Aorta (tissue), 5 donors: ENCODE measurements at regions of chr1 and their contacts with region 1.

Region 1: DNA sequence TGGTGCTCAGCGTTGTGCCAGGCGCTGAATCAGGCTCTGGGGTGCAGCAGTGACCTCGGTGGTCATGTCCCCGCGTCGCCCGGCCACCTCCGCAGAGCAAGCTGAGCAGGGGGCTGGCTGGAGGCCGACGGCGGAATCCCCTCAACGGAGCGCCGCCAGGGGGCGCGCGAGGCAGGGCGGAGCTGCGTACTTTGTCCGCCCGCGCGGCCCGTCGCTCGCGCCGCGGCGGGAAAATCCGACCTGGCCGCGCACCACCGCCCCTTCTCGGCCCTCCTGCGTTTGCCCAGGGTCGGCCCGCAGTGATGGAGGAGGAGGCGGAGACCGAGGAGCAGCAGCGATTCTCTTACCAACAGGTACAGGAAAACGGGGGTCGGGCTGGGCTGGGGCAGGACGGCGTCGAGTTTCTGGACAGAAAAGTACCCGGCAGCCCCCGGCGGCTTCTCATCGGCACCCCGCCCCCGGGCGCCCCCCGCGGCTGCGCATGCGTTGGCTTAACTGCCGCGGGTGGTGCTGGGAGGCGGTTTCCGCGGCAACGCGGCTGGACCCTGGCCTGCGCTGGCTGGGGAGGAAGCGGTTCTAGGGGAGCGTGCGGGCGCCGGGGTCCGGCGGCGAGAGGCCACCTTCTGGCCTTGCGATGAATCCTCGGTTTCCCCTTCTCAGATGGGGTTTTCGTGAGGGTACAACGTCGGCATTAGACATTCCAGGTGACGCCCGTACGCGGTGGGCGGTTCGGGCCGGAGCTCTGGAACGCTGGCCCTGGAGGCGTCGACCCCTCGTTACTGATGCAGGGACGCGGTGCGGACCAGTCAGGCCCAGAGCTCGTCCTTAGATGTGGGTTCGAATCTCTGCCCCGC is at the start of gene CENPS:
- DNase-seq: peak; percentile 96 to 98
- ATAC-seq: peak; percentile 99
- H3K4me3 ChIP-seq: peak within 1 kb of the TSS; percentile 38 to 46
- H3K27ac ChIP-seq: no peak within 1 kb of the TSS
- H3K4me1 ChIP-seq: no peaks in the 10 kb centered on the region
- H3K27me3 ChIP-seq: no peaks in the 10 kb centered on the region
- total RNA-seq, gene CENPS: 4.3 to 11.4 TPM

Region 2: GRCh38 chr1:10378081-10378841 is 52.2 kb before region 1 on chr1:
- intact Hi-C with region 1: loop called (anchors 1 kb)
- DNase-seq: peak; percentile 72 to 76
- ATAC-seq: peak; percentile 76
- H3K4me3 ChIP-seq: no peak overlapping the region
- H3K27ac ChIP-seq: peak overlapping the region in 1 of 2 donors; percentile 37
- H3K4me1 ChIP-seq: no peaks in the 10 kb centered on the region
- H3K27me3 ChIP-seq: no peaks in the 10 kb centered on the region

Region 3: GRCh38 chr1:10398734-10399623 is 31.5 kb before region 1 on chr1 and contains the start of gene PGD:
- intact Hi-C with region 1: loop called in 1 of 2 experiments (anchors 1 kb)
- DNase-seq: peak; percentile 99 to 100
- ATAC-seq: peak; percentile 100
- H3K4me3 ChIP-seq: peak within 1 kb of the TSS; percentile 84 to 85
- H3K27ac ChIP-seq: peak within 1 kb of the TSS in 1 of 2 donors; percentile 50
- H3K4me1 ChIP-seq: no peaks in the 10 kb centered on the region
- H3K27me3 ChIP-seq: no peaks in the 10 kb centered on the region
- total RNA-seq, gene PGD: 46.7 TPM

Region 4: DNA sequence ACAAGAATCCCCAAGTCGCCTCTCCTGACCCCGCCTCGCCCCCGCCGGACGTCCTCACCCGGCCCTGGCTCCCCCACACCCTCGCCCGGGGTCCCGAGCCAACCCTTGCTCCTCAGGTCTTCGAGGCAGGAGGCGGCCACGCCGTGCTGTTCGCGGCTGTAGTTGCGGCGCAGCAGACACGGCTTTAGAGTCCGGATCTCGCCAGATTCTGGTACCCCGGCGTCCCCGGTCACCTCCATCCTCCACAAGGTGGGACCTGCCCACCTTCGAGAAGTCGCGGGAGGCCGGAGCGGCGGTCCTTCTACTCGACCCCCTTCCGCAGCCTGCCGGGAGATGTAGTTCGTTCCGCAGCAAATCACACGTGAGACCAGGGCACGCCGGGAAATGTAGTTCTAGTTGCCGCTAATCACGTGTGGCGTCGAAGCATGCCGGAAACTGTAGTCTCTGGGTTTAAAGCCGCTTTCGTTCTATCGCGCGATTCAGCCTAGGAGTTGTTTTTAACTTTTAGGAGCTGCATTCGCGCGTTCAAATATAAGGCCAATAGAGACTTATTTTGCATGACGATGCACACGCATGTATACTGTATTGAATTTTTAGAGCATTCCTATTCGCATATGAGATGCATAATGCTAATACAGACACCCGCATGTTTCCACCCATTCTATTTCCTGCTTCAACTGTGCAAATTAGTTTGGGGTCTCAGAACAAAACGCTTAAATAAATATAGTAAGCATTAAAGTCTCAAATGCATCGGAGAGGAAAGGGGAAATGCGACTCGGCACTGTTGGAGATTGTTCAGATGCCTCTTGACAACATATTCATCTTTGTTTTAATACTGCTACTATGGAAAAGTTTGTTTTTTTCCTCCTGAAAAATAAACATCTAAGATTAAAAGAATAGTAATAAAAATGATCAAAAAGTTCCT is 42.0 kb after region 1 on chr1 and contains the start of gene DFFA:
- intact Hi-C with region 1: loop called in 1 of 2 experiments (anchors 5 kb)
- DNase-seq: peak; percentile 96 to 98
- ATAC-seq: peak; percentile 96
- H3K4me3 ChIP-seq: peak within 1 kb of the TSS; percentile 39 to 46
- H3K27ac ChIP-seq: no peak within 1 kb of the TSS
- H3K4me1 ChIP-seq: peaks cover 2 to 5% of the 10 kb centered on the region in 2 donors
- H3K27me3 ChIP-seq: peaks cover 0 to under 1% of the 10 kb centered on the region in 2 donors
- total RNA-seq, gene DFFA: 21.4 to 29.2 TPM

Region 5: DNA sequence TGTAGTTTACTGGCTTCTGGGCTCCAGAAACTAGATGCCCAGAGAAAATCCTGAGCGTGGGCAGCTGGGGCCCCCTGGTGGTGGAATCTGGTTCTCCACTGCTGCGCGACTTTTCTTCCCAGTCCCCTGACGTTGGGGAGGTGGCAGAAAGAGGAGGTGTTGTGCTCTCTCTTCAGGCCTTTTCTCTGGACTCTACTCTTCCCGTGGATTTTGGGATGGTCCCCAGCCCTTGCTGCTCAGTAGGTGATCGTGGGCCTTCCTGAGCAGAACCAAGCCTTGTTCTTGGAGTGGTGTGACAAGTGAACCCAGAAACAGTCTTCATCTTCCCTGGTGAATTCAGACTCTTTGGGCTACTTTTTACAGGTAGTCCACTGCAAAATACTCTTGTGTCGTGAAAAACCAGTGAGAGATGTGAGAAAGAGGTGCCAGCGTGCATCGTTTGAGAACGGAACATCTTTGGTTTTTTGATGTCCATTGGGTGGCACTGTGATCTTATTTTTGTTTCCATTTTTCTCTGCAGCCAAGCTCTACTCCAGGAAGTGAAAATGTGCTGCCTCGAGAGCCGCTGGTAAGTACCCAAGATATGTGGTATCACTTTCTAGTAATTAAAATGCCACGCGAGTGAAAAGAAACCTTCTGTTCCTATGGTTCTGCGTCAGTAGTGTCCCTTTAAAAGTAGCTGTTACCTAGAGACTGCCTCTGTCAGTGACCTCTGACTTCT is 64.5 kb after region 1 on chr1:
- intact Hi-C with region 1: loop called (anchors 1 to 5 kb)
- DNase-seq: peak; percentile 78 to 93
- ATAC-seq: peak; percentile 85
- H3K4me3 ChIP-seq: no peak overlapping the region
- H3K27ac ChIP-seq: no peak overlapping the region
- H3K4me1 ChIP-seq: no peaks in the 10 kb centered on the region
- H3K27me3 ChIP-seq: no peaks in the 10 kb centered on the region

Region 6: GRCh38 chr1:10867138-10867721 is 436.8 kb after region 1 on chr1:
- intact Hi-C with region 1: loop called in 1 of 2 experiments (anchors 2 kb)
- DNase-seq: peak; percentile 60 to 91
- ATAC-seq: peak; percentile 76
- H3K4me3 ChIP-seq: peak overlapping the region; percentile 15 to 31
- H3K27ac ChIP-seq: no peak overlapping the region
- H3K4me1 ChIP-seq: no peaks in the 10 kb centered on the region
- H3K27me3 ChIP-seq: no peaks in the 10 kb centered on the region